BJ (cell line): ENCODE measurements at regions of chr14 and their contacts with region 1.

Region 1: GRCh38 chr14:104708606-104709268 is 15.3 kb upstream of the ADSS1 start:
- DNase-seq: no peak
- H3K4me3 ChIP-seq: no peak overlapping the region
- H3K27me3 ChIP-seq: no peaks in the 10 kb centered on the region
- CTCF ChIP-seq: peak; percentile 98

Region 2: GRCh38 chr14:104528496-104529041 is 180.2 kb before region 1 on chr14:
- CTCF ChIA-PET with region 1: no interaction called
- POLR2A ChIA-PET with region 1: no interaction called
- DNase-seq: no peak
- H3K4me3 ChIP-seq: no peak overlapping the region
- H3K27me3 ChIP-seq: no peaks in the 10 kb centered on the region
- CTCF ChIP-seq: no peak

Region 3: DNA sequence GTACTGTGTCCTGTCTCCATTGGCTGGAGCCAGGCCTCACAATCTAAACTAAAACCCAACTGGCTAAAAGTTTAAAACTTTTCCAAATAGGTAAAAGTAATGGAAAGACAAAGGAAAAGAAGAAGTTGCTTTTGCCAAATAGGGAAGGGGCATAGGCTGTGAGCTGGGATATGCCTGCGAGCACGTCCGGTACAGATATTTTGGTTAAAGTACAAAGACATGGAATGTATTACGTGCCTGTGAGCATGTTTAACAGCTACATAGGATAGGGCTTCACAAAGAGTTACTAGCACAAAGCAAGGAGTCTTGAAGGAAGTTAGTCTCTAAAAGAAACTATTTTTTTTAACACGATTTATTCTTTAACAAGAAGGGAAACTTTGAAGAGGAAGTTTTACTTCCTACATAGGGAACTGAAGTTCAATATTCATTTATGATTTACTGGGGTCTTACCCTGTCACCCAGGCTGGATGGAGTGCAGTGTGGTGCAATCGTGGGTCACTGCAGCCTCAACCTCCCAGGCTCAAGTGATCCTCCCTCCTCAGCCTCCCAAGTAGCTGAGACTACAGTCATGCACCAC is 61.2 kb before region 1 on chr14:
- CTCF ChIA-PET with region 1: interaction called, 12 read pairs
- POLR2A ChIA-PET with region 1: no interaction called
- DNase-seq: no peak
- H3K4me3 ChIP-seq: no peak overlapping the region
- H3K27me3 ChIP-seq: peaks cover 2% of the 10 kb centered on the region
- CTCF ChIP-seq: no peak